HEK293 (cell line): ENCODE measurements at regions of chr2 and their contacts with region 1.

Region 1: GRCh38 chr2:224369028-224369632 is 32.8 kb downstream of the FAM124B start:
- H3K4me3 ChIP-seq: no peak overlapping the region
- H3K27ac ChIP-seq: no peak overlapping the region
- H3K4me1 ChIP-seq: no peaks in the 10 kb centered on the region
- CTCF ChIP-seq: peak; percentile 33

Region 2: DNA sequence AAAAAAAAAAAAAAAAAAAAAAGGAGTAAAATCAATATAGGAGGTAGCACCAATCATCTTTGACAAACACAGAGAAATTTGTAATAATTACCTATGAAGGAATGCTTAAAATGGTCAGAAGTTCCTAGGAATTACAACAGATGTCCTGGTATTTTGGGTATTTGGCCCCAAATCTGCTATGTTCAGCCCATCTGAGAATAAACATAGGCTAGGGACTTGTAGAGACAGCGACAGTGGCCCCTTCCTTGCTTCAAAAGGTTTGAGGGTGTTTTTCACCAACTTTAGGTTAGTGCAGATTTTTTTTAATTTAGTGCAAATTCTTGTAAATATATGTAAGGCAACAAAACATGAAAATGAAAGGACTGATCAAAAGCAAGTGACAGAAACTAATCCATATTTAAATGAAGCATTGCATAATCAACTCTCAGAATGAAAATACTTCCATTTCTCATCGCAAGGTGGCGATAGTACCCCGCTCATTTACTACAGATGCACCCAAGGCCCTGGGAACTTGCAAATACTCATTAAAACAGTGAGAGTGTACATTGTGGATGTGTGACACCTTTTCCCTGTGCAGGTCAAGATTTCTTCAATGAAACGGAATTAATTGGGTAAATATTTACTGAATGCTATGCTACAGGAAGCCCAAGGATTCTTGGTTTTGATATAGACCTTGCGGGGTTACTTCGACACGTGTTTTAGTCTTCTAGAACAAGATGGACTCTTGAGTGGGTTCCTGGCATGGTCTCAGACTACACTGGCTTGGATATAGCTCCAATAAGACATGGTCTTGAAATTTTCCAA is 11.8 kb before region 1 on chr2:
- CTCF ChIA-PET with region 1: interaction called, 14 read pairs
- POLR2A ChIA-PET with region 1: no interaction called
- H3K4me3 ChIP-seq: no peak overlapping the region
- H3K27ac ChIP-seq: no peak overlapping the region
- H3K4me1 ChIP-seq: peaks cover 4% of the 10 kb centered on the region; the same call in 1 of the 2 replicates
- CTCF ChIP-seq: peak; percentile 50; the same call in 1 of the 2 replicates

Region 3: GRCh38 chr2:224381521-224382279 is 12.6 kb after region 1 on chr2:
- CTCF ChIA-PET with region 1: interaction called, 14 read pairs
- POLR2A ChIA-PET with region 1: no interaction called
- H3K4me3 ChIP-seq: no peak overlapping the region
- H3K27ac ChIP-seq: no peak overlapping the region
- H3K4me1 ChIP-seq: no peaks in the 10 kb centered on the region
- CTCF ChIP-seq: no peak

Region 4: GRCh38 chr2:224658780-224659405 is 289.8 kb after region 1 on chr2:
- CTCF ChIA-PET with region 1: no interaction called
- POLR2A ChIA-PET with region 1: no interaction called
- H3K4me3 ChIP-seq: no peak overlapping the region
- H3K27ac ChIP-seq: no peak overlapping the region
- H3K4me1 ChIP-seq: no peaks in the 10 kb centered on the region
- CTCF ChIP-seq: no peak